Calu3 (cell line): ENCODE measurements at regions of chr11 and their contacts with region 1.

Region 1: DNA sequence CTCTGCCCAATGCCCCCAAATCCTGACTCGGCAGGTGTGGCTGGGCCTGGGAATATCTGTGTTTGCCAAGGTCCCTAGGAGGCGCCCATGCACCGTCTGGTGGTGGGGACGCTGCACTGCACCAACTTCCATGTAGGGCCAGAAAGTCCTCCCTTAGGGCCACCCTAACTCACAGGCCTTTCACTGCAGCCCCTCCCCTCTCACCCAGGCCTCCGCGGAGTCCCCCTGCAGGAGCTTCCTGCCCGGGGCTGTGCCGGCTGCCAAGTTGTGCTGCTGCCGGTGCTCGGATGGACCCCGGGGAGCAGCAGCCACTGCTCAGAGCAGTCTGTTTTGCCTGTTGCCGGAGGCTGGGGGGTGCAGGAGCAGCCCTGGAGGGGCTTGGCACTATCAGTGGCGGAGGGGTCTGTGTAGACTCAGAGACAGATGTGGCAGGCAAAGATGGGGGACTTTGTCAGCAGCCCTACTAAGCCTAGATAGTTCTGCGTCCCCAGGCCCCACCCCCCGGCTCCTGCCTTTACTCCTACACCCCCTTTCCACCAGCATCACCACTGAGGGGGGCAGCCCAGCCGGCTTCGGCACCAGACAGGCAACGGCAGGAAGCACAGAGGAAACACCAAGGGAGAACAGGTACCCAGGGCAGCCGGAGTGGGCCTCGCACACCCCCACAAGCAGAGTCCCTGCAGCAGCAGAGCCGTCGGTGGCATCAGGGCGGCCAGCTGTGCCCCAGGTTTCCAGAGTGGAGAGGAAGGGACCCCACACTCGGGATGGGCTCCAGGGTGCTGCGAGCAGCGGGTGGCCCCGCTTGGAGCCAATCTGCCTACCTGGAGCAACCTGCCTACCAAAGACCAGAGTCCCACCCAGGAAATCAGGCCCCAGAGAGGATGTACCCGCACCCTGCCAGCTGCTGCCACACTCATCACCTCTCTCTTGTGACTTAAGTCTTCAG is 124.3 kb downstream of the TRIM29 start:
- DNase-seq: peak; percentile 62
- H3K4me3 Mint-ChIP-seq: no peak overlapping the region
- H3K27ac Mint-ChIP-seq: no peak overlapping the region
- H3K4me1 Mint-ChIP-seq: no peaks in the 10 kb centered on the region
- H3K27me3 Mint-ChIP-seq: peaks cover 77% of the 10 kb centered on the region
- CTCF ChIP-seq: no peak

Region 2: GRCh38 chr11:119891055-119891768 is 122.4 kb before region 1 on chr11:
- CTCF ChIA-PET with region 1: no interaction called
- intact Hi-C with region 1: no loop called
- DNase-seq: no peak
- H3K4me3 Mint-ChIP-seq: no peak overlapping the region
- H3K27ac Mint-ChIP-seq: no peak overlapping the region
- H3K4me1 Mint-ChIP-seq: no peaks in the 10 kb centered on the region
- H3K27me3 Mint-ChIP-seq: peaks cover 30% of the 10 kb centered on the region
- CTCF ChIP-seq: no peak

Region 3: DNA sequence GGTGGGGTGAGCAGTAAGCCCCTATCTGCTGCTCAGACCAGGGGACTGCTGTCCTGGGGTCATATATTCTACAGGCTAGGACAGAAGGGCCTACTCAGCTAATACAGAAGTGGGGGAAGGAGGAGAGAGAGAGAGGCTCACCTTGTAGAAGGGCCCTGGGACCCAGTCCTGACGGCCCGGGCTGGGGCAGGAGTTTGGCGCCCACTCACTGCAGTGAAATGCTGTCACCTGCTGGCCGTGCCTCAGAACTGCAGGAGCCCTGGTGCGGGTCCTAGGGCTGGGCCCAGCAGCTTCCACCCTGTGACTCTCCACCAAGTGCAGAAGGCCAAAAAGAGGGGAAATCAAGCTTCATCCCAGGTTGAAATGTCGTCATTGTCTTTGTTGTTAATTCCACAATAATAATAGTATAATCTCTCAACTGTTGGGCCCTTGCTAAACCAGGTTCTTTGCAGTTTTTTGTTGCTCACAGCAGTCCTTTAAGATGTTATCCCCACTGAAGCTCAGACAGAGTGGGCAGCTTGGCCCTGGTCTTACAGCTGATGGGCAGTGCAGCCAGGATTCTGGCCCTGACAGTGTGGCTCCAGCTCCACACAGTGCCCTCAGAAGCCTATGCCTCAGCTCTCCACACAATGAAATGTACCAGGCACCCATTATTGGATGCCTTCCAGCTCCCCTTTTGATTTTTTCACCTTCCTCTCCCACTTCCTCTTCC is 94.7 kb after region 1 on chr11:
- CTCF ChIA-PET with region 1: interaction called, 3 read pairs
- intact Hi-C with region 1: loop called (anchors 5 kb)
- DNase-seq: peak; percentile 75
- H3K4me3 Mint-ChIP-seq: no peak overlapping the region
- H3K27ac Mint-ChIP-seq: no peak overlapping the region
- H3K4me1 Mint-ChIP-seq: no peaks in the 10 kb centered on the region
- H3K27me3 Mint-ChIP-seq: peaks cover 45% of the 10 kb centered on the region
- CTCF ChIP-seq: peak; percentile 87